Activated B cell treated with CpG ODN at 0.5 μM for 24 hours (primary cell): ENCODE measurements at regions of chr3 and their contacts with region 1.

Region 1: GRCh38 chr3:101069901-101070798 is 76.9 kb upstream of the ABI3BP start:
- DNase-seq: peak; percentile 32
- ATAC-seq: peak; percentile 72
- H3K4me3 Mint-ChIP-seq: no peak overlapping the region
- H3K27ac Mint-ChIP-seq: no peak overlapping the region
- H3K4me1 Mint-ChIP-seq: no peaks in the 10 kb centered on the region
- H3K27me3 Mint-ChIP-seq: peaks cover 10% of the 10 kb centered on the region
- CTCF ChIP-seq: no peak

Region 2: DNA sequence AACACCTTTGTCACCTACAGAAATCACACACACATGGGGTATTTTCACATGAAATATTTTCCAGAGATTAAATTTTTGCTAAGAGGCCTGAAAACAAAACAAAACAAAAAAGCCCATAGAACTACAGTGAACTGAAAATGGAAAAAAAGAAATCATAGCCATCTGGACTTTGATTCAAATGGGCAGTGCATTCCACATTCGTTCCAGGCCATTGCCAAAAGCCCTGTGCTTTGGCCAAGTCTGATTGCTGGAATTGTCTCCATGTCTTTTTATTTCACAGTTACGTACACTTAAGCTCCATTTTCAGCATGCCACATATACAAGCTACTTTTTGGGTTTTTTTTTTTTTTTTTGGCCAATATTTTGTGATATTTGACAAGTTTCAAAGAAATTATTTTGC is 313.7 kb before region 1 on chr3:
- CTCF ChIA-PET with region 1: no interaction called
- POLR2A ChIA-PET with region 1: no interaction called
- intact Hi-C with region 1: no loop called
- DNase-seq: no peak
- ATAC-seq: no peak
- H3K4me3 Mint-ChIP-seq: no peak overlapping the region
- H3K27ac Mint-ChIP-seq: no peak overlapping the region
- H3K4me1 Mint-ChIP-seq: no peaks in the 10 kb centered on the region
- H3K27me3 Mint-ChIP-seq: no peaks in the 10 kb centered on the region
- CTCF ChIP-seq: no peak

Region 3: GRCh38 chr3:101091489-101091888 is 21.3 kb after region 1 on chr3:
- CTCF ChIA-PET with region 1: no interaction called
- POLR2A ChIA-PET with region 1: no interaction called
- intact Hi-C with region 1: no loop called
- DNase-seq: no peak
- ATAC-seq: no peak
- H3K4me3 Mint-ChIP-seq: no peak overlapping the region
- H3K27ac Mint-ChIP-seq: no peak overlapping the region
- H3K4me1 Mint-ChIP-seq: no peaks in the 10 kb centered on the region
- H3K27me3 Mint-ChIP-seq: no peaks in the 10 kb centered on the region
- CTCF ChIP-seq: no peak

Region 4: GRCh38 chr3:101195951-101196713 is 126.0 kb after region 1 on chr3:
- CTCF ChIA-PET with region 1: interaction called, 4 read pairs
- POLR2A ChIA-PET with region 1: no interaction called
- intact Hi-C with region 1: loop called (anchors 1 kb)
- DNase-seq: no peak
- ATAC-seq: no peak
- H3K4me3 Mint-ChIP-seq: no peak overlapping the region
- H3K27ac Mint-ChIP-seq: no peak overlapping the region
- H3K4me1 Mint-ChIP-seq: no peaks in the 10 kb centered on the region
- H3K27me3 Mint-ChIP-seq: peaks cover 4% of the 10 kb centered on the region
- CTCF ChIP-seq: no peak